Posterior vena cava (tissue), 2 donors: ENCODE measurements at regions of chr22 and their contacts with region 1.

Region 1: GRCh38 chr22:42720263-42721044 is at the start of gene A4GALT:
- DNase-seq: no peak
- total RNA-seq, gene A4GALT: 42.2 to 59.8 TPM

Region 2: DNA sequence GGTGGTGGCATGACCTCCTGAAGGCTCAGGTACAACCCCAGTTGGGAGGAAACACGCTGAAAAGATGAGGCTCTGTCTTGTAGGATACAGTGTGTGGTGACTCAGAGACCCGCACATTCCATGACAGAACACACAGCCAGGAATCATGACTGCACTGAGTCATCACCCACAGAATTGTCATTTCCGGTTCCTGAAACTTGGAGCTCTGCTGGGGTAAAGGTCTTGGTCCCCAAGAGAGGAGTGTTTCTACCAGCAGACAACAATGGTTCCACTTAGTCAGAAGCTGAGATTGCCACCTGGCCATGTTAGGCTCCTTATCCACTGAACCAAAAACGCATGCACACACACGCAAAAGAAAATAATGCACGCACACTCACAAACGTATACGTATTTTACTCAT is 39.8 kb before region 1 on chr22:
- intact Hi-C with region 1: loop called in 1 of 2 experiments (anchors 5 kb)
- DNase-seq: peak; percentile 83